Dendritic cell treated with granulocyte-macrophage colony-stimulating factor and Interleukin-4, amounts not matched to agents 40 ng/mL and 50 ng/mL, for 4 days (primary cell): ENCODE measurements at regions of chr4 and their contacts with region 1.

Region 1: GRCh38 chr4:141711014-141711610 is 74.7 kb downstream of the IL15 start:
- H3K4me3 Mint-ChIP-seq: no peak overlapping the region
- H3K27ac Mint-ChIP-seq: no peak overlapping the region
- H3K4me1 Mint-ChIP-seq: peaks cover 25% of the 10 kb centered on the region
- H3K27me3 Mint-ChIP-seq: peaks cover 30% of the 10 kb centered on the region

Region 2: DNA sequence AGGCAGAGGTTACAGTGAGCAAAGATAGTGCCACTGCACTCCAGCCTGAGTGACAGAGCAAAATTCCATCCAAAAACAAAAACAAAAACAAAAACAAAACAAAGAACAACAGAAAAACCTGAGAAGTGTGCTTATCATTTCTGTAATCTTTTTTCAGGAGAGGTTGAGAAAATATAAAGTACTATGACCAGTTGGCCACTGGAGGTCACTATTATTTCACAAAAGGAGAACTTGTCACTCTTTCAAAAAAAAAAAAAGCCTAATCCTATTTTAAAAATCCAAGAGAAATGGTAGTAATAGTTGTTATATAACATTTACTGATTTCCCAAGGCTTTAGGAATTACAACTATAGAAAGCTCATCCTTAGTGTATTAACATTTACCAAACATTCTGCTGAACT is 552.9 kb before region 1 on chr4:
- intact Hi-C with region 1: loop called (anchors 5 kb)
- H3K4me3 Mint-ChIP-seq: no peak overlapping the region
- H3K27ac Mint-ChIP-seq: no peak overlapping the region
- H3K4me1 Mint-ChIP-seq: no peaks in the 10 kb centered on the region
- H3K27me3 Mint-ChIP-seq: peaks cover 5% of the 10 kb centered on the region

Region 3: DNA sequence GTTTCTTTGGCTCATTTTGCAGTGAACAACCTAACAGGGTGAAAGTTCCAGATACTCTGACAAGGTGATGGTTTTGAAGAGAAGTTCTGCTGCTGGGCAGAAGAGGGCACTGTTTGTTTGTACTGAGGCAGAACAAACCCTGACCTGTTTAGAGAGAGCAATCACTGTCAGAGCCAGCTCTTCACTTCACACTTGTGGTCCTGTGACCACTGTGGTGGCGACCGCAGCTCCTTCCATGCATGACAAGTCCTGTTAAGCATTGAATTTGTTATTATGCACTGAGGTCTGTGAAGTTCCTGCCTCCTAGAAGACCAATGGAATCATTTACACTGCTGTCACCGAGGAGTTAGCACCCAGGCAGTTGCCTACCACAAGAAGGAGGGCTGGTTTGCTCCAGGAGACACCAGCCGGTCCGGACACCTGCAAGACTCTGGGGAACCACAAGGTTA is 403.8 kb before region 1 on chr4:
- intact Hi-C with region 1: loop called (anchors 2 kb)
- H3K4me3 Mint-ChIP-seq: no peak overlapping the region
- H3K27ac Mint-ChIP-seq: peak overlapping the region; percentile 27
- H3K4me1 Mint-ChIP-seq: peaks cover 37% of the 10 kb centered on the region
- H3K27me3 Mint-ChIP-seq: peaks cover 2% of the 10 kb centered on the region

Region 4: GRCh38 chr4:141768954-141769353 is 57.8 kb after region 1 on chr4:
- intact Hi-C with region 1: no loop called
- H3K4me3 Mint-ChIP-seq: no peak overlapping the region
- H3K27ac Mint-ChIP-seq: no peak overlapping the region
- H3K4me1 Mint-ChIP-seq: no peaks in the 10 kb centered on the region
- H3K27me3 Mint-ChIP-seq: no peaks in the 10 kb centered on the region